HCT116 (cell line): ENCODE measurements at regions of chr10 and their contacts with region 1.

Region 1: DNA sequence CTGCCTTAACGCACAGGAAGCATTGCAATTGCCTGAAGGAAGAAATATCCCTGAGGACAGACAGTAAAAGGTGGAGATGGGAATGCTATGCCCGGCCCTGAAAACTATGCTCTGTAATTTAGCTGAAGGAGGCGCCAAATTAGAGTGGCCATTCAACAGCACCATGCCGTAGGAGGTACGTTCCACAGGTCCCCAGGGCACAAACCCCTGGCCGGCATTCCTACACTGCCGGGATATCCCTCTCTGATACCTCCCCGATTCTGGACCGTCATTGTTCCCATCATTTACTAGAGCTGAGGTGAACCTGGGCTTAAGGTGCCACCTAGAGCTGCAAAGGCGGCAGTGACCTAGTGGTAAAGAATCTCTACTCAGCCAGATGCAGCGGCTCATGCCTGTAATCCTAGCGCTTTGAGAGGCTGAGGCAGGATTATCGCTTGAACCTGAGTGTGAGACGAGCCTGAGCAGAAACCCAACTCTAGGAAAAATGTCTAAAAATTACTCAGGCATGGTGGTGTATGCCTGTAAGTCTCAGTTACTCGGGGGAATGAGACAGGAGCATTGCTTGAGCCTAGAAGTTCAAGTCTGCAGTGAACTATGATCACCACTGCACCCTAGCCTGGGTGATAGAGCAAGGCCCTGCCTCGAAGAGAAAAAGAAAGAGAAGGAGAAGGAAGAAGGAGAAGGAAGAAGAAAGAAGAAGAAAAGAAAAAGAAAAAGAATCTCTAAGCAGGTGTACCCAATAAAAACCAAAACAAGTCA is 53.0 kb upstream of the TNKS2 start:
- DNase-seq: peak; percentile 67
- ATAC-seq: peak; percentile 99
- H3K4me3 ChIP-seq: peak overlapping the region; percentile 31 to 36
- H3K27ac ChIP-seq: no peak overlapping the region
- H3K4me1 ChIP-seq: peaks cover 0 to 10% of the 10 kb centered on the region in 2 experiments; a peak in 1 of 4 replicates
- H3K27me3 ChIP-seq: no peaks in the 10 kb centered on the region
- CTCF ChIP-seq: peak; percentile 65 to 84 (median 72); a peak in 5 of 6 replicates
- POLR2A ChIP-seq: no peak
- RAD21 ChIP-seq: peak; percentile 93

Region 2: DNA sequence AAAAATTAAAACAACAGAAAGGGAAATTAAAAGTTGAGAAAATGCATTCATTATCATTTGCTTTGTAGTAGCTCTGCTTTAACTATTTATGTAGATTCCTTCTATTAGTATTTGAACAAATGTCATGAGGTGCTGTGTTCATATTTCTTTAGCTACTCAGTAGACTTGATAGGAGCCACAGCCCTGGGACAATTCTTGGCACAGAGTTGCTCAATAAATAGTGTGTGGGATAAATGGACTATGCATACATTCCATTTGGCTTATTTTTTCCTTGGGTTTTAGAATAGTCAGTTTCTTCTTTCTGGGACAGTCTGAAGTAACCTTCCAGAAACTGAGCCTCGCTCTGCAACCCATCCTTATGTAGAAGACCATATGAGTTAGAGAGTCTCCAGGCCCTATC is 860.1 kb before region 1 on chr10:
- CTCF ChIA-PET with region 1: interaction called, 5 read pairs
- POLR2A ChIA-PET with region 1: no interaction called
- RAD21 ChIA-PET with region 1: no interaction called
- intact Hi-C with region 1: loop called (anchors 10 kb)
- DNase-seq: no peak
- ATAC-seq: no peak
- H3K4me3 ChIP-seq: no peak overlapping the region
- H3K27ac ChIP-seq: no peak overlapping the region
- H3K4me1 ChIP-seq: no peaks in the 10 kb centered on the region; a peak in 1 of 4 replicates
- H3K27me3 ChIP-seq: no peaks in the 10 kb centered on the region
- CTCF ChIP-seq: no peak
- POLR2A ChIP-seq: no peak
- RAD21 ChIP-seq: no peak

Region 3: DNA sequence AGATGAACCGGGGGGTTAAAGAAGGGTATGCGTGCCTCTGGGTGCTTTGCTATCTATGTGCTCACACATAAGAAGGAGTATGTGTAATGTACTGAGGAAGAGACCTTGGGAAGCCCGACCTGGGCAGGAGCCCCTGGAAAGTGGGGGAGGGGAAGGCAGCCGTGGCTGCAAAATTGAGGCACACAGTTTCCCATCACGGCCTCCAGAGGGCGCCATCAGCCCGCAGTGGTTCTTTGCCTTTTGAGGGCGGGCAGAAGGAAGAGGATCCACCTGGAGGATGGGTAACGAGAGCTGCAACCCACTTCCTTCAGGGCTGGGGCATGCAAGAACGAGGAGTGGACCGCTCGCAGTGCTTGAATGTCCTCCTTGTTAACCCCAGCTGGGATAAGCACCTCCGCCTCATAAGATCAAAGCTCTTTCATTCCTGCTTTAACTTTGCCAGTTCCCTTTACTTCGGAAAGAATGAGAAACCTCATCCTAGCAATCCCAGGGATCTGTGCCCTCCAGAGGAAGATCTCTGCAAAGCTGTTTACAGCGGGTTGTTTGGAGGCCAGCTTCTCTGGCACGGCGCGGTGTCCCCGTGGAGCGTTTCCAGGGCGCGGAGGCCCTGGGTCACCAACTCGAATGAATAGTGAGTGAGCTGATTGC is 446.9 kb before region 1 on chr10:
- CTCF ChIA-PET with region 1: interaction called, 13 read pairs
- POLR2A ChIA-PET with region 1: no interaction called
- RAD21 ChIA-PET with region 1: no interaction called
- intact Hi-C with region 1: loop called (anchors 1 kb)
- DNase-seq: peak; percentile 56
- ATAC-seq: peak; percentile 94
- H3K4me3 ChIP-seq: peak overlapping the region in 1 of 2 experiments; percentile 8; a peak in 1 of 4 replicates
- H3K27ac ChIP-seq: no peak overlapping the region
- H3K4me1 ChIP-seq: peaks cover 4 to 11% of the 10 kb centered on the region in 2 experiments; a peak in 2 of 4 replicates
- H3K27me3 ChIP-seq: no peaks in the 10 kb centered on the region
- CTCF ChIP-seq: peak; percentile 86 to 90 (median 87)
- POLR2A ChIP-seq: no peak
- RAD21 ChIP-seq: peak; percentile 96

Region 4: GRCh38 chr10:91406322-91406721 is 338.9 kb before region 1 on chr10:
- CTCF ChIA-PET with region 1: no interaction called
- POLR2A ChIA-PET with region 1: no interaction called
- RAD21 ChIA-PET with region 1: no interaction called
- intact Hi-C with region 1: no loop called
- DNase-seq: no peak
- ATAC-seq: no peak
- H3K4me3 ChIP-seq: no peak overlapping the region
- H3K27ac ChIP-seq: no peak overlapping the region
- H3K4me1 ChIP-seq: peaks cover 5 to 16% of the 10 kb centered on the region in 2 experiments; a peak in 3 of 4 replicates
- H3K27me3 ChIP-seq: no peaks in the 10 kb centered on the region
- CTCF ChIP-seq: no peak
- POLR2A ChIP-seq: no peak
- RAD21 ChIP-seq: no peak

Region 5: DNA sequence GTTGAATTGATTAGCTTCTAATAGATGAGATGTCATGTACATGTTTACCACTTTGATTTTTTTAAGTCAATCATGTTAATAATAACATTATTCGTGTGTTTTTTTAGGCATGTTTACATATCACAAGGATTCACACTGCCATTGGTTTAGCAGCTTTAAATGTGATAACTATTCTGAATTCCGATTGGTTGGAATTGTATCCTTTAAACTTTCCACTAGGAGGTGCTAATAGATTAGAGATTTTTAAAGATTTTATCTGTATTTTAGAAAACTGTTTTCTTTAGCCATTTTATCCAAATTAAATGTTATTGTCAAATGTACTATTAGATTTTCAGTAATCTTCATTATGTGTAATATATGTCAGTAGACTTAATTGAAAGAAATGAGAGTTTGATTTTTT is 251.9 kb before region 1 on chr10:
- CTCF ChIA-PET with region 1: interaction called, 3 read pairs
- POLR2A ChIA-PET with region 1: no interaction called
- RAD21 ChIA-PET with region 1: no interaction called
- intact Hi-C with region 1: loop called (anchors 10 kb)
- DNase-seq: peak; percentile 32
- ATAC-seq: no peak
- H3K4me3 ChIP-seq: no peak overlapping the region
- H3K27ac ChIP-seq: no peak overlapping the region
- H3K4me1 ChIP-seq: no peaks in the 10 kb centered on the region
- H3K27me3 ChIP-seq: no peaks in the 10 kb centered on the region
- CTCF ChIP-seq: peak; percentile 10 to 51 (median 40); a peak in 3 of 6 replicates
- POLR2A ChIP-seq: no peak
- RAD21 ChIP-seq: peak; percentile 53; the same call in 1 of the 2 replicates

Region 6: GRCh38 chr10:91643700-91644099 is 101.6 kb before region 1 on chr10:
- CTCF ChIA-PET with region 1: interaction called, 8 read pairs
- POLR2A ChIA-PET with region 1: no interaction called
- RAD21 ChIA-PET with region 1: no interaction called
- intact Hi-C with region 1: loop called (anchors 1 kb)
- DNase-seq: no peak
- ATAC-seq: peak; percentile 69
- H3K4me3 ChIP-seq: no peak overlapping the region
- H3K27ac ChIP-seq: no peak overlapping the region
- H3K4me1 ChIP-seq: no peaks in the 10 kb centered on the region
- H3K27me3 ChIP-seq: no peaks in the 10 kb centered on the region
- CTCF ChIP-seq: peak; percentile 35 to 50 (median 41); a peak in 5 of 6 replicates
- POLR2A ChIP-seq: no peak
- RAD21 ChIP-seq: peak; percentile 60